Lower lobe of right lung (tissue), 2 donors: ENCODE measurements at regions of chr1 and their contacts with region 1.

Region 1: DNA sequence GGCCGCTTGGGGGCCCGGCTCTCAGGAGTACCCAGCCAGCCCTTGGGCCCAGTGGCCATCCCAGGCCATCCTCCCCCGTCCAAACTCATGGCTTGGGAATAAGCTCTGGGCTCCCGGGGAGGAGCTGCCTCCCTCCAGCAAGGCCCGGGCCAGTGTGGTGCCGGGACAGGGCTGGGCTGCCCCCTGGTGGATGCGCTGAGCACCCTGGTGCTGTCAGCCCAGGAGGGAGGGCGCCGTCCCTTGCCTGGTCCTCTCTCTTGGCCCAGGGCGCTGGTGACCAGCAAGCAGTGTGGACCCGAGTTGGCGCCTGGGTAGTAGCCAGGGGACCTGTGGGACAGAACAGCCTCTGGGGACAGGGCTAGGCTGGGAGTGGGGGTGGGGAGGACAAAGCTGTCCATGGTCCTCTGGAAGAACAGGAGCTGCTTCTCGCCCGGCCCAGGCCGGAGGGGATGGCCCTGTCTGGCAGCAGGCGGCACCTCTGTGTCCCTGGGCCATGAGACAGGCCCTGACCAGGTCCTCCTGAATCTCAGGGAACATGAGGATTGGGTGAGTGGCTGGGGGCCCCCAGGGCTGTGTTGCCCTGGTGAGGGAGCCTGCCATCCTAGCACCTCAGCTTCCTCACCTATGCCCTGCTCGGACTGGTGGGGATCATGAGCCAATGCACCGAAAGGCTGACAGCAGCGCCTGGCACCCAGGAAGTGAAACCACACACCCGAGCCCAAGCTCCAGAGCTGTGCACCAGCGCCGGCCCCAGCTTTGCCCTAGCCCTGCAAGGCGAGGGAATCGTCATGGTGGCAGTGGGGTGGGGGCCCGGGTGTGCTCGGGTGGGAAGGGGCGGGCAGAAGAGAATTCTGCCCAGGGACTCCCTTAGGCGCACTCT is 9.4 kb downstream of the MORN1 start:
- DNase-seq: peak; percentile 85
- ATAC-seq: peak; percentile 92 to 95
- H3K4me3 ChIP-seq: no peak overlapping the region
- H3K27ac ChIP-seq: no peak overlapping the region
- H3K4me1 ChIP-seq: peaks cover 10% of the 10 kb centered on the region
- H3K27me3 ChIP-seq: no peaks in the 10 kb centered on the region
- CTCF ChIP-seq: peak; percentile 93

Region 2: DNA sequence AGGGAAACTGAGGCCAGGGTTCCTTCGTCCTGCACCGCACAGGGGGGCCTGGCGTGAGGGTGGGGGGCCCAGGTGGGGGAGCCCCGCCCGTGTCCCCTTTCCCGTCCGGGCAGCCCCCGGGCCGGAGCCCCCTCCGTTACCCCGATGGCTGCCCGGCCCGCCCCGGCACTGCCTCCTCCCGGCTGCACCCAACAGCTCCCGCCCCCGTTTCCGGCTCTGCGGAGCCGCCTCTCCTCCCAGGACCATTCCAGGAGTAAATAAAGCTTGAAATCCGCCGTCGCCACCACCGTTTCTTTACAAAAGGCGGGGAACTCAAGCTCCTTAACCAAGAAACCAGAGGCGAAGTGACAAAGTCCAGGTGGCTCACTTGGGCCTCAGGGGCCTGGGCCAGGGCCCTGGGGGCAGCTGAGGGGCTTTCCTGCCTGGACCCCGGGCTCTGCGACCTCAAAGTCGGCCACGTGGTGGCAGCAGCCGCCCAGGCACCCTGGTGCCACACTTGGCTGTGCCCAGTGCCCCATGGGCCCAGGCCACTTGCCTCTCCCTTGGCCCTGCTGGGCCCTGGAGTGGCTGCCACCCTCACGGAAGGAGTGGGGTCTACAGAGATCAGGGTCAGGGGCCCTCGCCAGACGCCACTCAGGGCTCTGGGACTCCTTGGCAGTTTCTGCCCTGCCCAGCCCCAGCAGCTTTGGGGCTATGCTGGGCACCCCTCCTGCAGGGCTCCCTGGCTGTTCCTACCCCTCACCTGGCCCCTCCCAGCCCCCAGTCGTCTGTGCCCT is 186.9 kb before region 1 on chr1:
- intact Hi-C with region 1: loop called (anchors 5 kb)
- DNase-seq: peak; percentile 93
- ATAC-seq: peak; percentile 83 to 86
- H3K4me3 ChIP-seq: peak overlapping the region; percentile 72
- H3K27ac ChIP-seq: peak overlapping the region; percentile 92
- H3K4me1 ChIP-seq: peaks cover 64% of the 10 kb centered on the region
- H3K27me3 ChIP-seq: no peaks in the 10 kb centered on the region
- CTCF ChIP-seq: peak; percentile 97

Region 3: DNA sequence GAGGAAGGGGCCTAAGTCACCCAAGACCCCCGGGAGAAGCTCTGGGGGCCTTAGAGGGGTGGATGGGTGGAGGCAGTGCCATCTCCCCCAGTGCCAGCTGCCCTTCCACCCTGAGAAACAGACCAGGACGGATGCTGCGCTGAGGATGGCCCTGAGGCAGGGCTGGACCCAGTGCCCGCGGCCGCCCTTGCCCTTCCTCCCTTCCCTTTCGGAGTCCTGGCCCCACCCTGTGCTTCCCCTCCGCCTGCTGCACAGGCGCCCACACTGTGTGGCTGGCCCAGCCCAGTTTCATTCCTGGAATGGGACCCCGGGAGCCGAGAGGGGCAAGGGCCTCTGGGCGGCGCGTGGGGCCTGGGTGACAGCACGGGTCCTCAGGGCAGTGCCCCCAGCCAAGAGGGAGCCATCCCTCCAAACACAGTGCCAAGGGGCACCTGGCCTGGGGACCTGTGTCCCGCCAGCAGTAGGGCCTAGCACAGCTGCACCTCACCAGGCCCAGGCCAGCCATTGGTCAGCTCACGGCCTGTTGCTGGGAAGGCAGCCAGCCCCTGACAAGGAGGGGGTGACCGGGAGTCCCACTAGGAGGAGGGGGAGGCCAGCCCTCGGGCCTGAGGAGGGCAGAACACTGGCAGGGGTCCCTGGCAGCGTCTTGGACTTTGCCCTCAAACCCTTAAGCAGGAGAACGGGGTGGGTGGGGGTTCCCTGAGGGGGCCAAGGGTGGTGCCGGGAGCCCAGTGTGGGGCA is 167.3 kb before region 1 on chr1:
- intact Hi-C with region 1: no loop called
- DNase-seq: peak; percentile 64
- ATAC-seq: peak in 1 of 2 donors; percentile 21
- H3K4me3 ChIP-seq: no peak overlapping the region
- H3K27ac ChIP-seq: peak overlapping the region; percentile 97
- H3K4me1 ChIP-seq: peaks cover 35% of the 10 kb centered on the region
- H3K27me3 ChIP-seq: no peaks in the 10 kb centered on the region
- CTCF ChIP-seq: no peak

Region 4: DNA sequence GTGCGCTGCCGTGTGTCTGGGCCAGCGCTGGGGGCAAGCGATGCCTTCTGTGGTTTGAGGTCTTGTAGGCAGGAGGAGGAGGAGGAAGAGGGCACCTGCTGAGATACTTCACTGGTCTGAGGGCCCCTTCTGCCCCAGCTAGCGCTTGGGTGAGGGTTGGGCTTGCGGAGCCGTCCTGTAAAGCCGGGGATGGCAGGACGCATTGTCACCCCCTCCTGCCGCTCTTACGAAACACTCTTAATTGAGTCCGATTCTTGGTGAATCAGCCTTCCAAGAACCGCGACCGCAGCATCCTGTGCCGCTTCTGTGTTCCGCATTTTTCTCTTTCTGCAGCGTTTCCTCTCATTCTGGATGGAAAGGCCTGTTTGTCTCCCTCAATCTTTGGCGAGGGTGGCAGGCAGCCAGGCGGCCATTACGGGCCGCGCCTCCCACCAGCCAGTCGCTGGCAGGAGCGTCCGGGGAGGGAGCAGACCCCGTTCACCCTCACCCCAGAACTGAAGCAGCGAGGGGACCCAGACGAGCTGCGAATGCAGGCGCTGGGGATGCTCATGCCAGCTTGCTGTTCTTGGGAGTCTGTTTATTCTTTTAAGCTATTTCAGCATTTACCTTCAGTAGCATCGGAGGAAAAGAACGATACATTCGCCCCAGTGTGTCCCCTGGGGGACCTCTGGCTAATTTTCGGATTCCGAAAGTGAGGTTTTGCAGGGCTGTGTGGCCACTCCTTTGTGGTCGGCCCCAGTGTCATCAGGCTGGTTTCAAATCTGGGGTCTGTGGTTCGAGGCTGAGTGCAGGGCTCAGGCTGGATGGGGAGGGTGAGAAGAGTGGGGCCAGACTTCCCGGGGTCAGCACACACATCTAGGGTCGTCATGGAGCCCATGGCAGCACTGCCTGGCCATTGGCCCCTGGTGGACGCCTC is 91.1 kb before region 1 on chr1:
- intact Hi-C with region 1: no loop called
- DNase-seq: peak; percentile 89
- ATAC-seq: peak; percentile 81 to 84
- H3K4me3 ChIP-seq: peak overlapping the region; percentile 45
- H3K27ac ChIP-seq: peak overlapping the region; percentile 88
- H3K4me1 ChIP-seq: peaks cover 83% of the 10 kb centered on the region
- H3K27me3 ChIP-seq: no peaks in the 10 kb centered on the region
- CTCF ChIP-seq: no peak

Region 5: GRCh38 chr1:2330511-2331199 is 51.3 kb before region 1 on chr1:
- intact Hi-C with region 1: no loop called
- DNase-seq: peak; percentile 75
- ATAC-seq: peak; percentile 74 to 80
- H3K4me3 ChIP-seq: no peak overlapping the region
- H3K27ac ChIP-seq: peak overlapping the region; percentile 53
- H3K4me1 ChIP-seq: peaks cover 16% of the 10 kb centered on the region
- H3K27me3 ChIP-seq: no peaks in the 10 kb centered on the region
- CTCF ChIP-seq: no peak

Region 6: GRCh38 chr1:2594001-2594640 is 212.1 kb after region 1 on chr1:
- intact Hi-C with region 1: no loop called
- DNase-seq: peak; percentile 79
- ATAC-seq: peak; percentile 6 to 40
- H3K4me3 ChIP-seq: peak overlapping the region; percentile 43
- H3K27ac ChIP-seq: peak overlapping the region; percentile 24
- H3K4me1 ChIP-seq: peaks cover 21% of the 10 kb centered on the region
- H3K27me3 ChIP-seq: no peaks in the 10 kb centered on the region
- CTCF ChIP-seq: no peak